Calu3 (cell line): ENCODE measurements at regions of chr10 and their contacts with region 1.

Region 1: GRCh38 chr10:97596101-97597062 is 6.9 kb downstream of the C10orf62 start:
- DNase-seq: peak; percentile 16
- H3K4me3 Mint-ChIP-seq: peak overlapping the region; percentile 22
- H3K27ac Mint-ChIP-seq: peak overlapping the region; percentile 60
- H3K4me1 Mint-ChIP-seq: peaks cover 24% of the 10 kb centered on the region
- H3K27me3 Mint-ChIP-seq: no peaks in the 10 kb centered on the region
- CTCF ChIP-seq: no peak

Region 2: DNA sequence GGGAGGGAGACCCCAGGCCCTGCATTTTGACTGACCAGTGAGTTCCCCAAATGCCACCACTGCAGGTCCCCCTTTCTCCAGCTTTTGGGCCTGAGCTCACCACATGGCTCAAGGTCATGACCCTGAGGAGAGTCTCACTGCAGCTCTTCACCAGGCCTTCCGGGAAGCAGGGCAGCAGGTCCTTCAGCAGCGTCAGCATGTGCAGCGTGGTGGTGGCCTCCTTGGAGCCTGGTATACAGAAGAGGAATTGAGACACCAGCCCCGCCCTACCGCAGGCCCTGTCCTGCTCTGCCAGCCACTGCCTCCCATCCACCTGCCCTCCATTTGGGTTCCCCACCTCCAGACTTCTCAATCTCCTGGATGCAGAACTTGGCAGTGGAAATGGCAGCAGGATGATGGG is 208.2 kb before region 1 on chr10:
- CTCF ChIA-PET with region 1: no interaction called
- intact Hi-C with region 1: no loop called
- DNase-seq: no peak
- H3K4me3 Mint-ChIP-seq: no peak overlapping the region
- H3K27ac Mint-ChIP-seq: no peak overlapping the region
- H3K4me1 Mint-ChIP-seq: no peaks in the 10 kb centered on the region
- H3K27me3 Mint-ChIP-seq: no peaks in the 10 kb centered on the region
- CTCF ChIP-seq: no peak

Region 3: DNA sequence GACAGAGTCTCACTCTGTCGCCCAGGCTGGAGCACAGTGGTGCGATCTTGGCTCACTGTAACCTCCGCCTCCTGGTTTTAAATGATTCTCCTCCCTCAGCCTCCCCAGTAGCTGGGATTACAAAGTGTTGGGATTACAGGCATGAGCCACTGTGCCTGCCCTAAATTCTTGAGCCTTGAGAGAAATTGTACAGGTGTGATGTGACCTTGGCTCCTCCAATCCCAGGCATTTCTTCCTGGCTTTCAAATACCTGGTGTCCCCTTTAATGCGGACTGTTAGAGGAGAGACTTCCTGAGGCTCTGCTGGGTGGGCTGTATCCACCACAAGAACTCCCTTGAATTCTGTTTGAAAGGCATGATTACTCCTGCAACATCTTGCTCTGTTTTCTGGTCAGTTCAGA is 21.9 kb after region 1 on chr10:
- CTCF ChIA-PET with region 1: interaction called, 10 read pairs
- intact Hi-C with region 1: no loop called
- DNase-seq: no peak
- H3K4me3 Mint-ChIP-seq: no peak overlapping the region
- H3K27ac Mint-ChIP-seq: no peak overlapping the region
- H3K4me1 Mint-ChIP-seq: no peaks in the 10 kb centered on the region
- H3K27me3 Mint-ChIP-seq: no peaks in the 10 kb centered on the region
- CTCF ChIP-seq: no peak